ENCODE measurements at regions of chr1 and their contacts with region 1.

Region 1: GRCh38 chr1:246002725-246003441 is 504.2 kb downstream of the SMYD3 start:
- DNase-seq: peak; percentile 74 to 96 (median 88)
- ATAC-seq: peak; percentile 82
- H3K4me3 ChIP-seq: no peak overlapping the region
- H3K4me1 ChIP-seq: no peaks in the 10 kb centered on the region
- CTCF ChIP-seq: peak; percentile 64

Region 2: GRCh38 chr1:245156081-245156735 is 846.7 kb before region 1 on chr1:
- intact Hi-C with region 1: loop called (anchors 5 kb)
- DNase-seq: peak; percentile 85 to 91 (median 87)
- ATAC-seq: peak; percentile 97
- H3K4me3 ChIP-seq: no peak overlapping the region
- H3K4me1 ChIP-seq: peaks cover 44% of the 10 kb centered on the region
- CTCF ChIP-seq: peak; percentile 74

Region 3: GRCh38 chr1:245874942-245875580 is 127.8 kb before region 1 on chr1:
- intact Hi-C with region 1: loop called in 1 of 2 experiments (anchors 10 kb)
- DNase-seq: peak in 2 of 3 donors; percentile 40 to 62
- ATAC-seq: peak; percentile 61
- H3K4me3 ChIP-seq: no peak overlapping the region
- H3K4me1 ChIP-seq: no peaks in the 10 kb centered on the region
- CTCF ChIP-seq: no peak

Region 4: GRCh38 chr1:245888809-245889208 is 114.1 kb before region 1 on chr1:
- intact Hi-C with region 1: loop called in 1 of 2 experiments (anchors 5 kb)
- DNase-seq: peak in 1 of 3 donors; percentile 60
- ATAC-seq: peak; percentile 46
- H3K4me3 ChIP-seq: no peak overlapping the region
- H3K4me1 ChIP-seq: no peaks in the 10 kb centered on the region
- CTCF ChIP-seq: no peak